MCF 10A (cell line): ENCODE measurements at regions of chr1 and their contacts with region 1.

Region 1: GRCh38 chr1:164786980-164787833 is 228.2 kb downstream of the PBX1 start:
- DNase-seq: peak; percentile 91
- H3K4me3 Mint-ChIP-seq: no peak overlapping the region
- H3K27ac Mint-ChIP-seq: no peak overlapping the region
- H3K4me1 Mint-ChIP-seq: peaks cover 38% of the 10 kb centered on the region
- H3K27me3 Mint-ChIP-seq: no peaks in the 10 kb centered on the region
- CTCF ChIP-seq: peak; percentile 98

Region 2: GRCh38 chr1:163528710-163529348 is 1258.4 kb before region 1 on chr1:
- CTCF ChIA-PET with region 1: interaction called, 16 read pairs
- POLR2A ChIA-PET with region 1: no interaction called
- intact Hi-C with region 1: loop called (anchors 2 kb)
- DNase-seq: peak; percentile 62
- H3K4me3 Mint-ChIP-seq: no peak overlapping the region
- H3K27ac Mint-ChIP-seq: no peak overlapping the region
- H3K4me1 Mint-ChIP-seq: no peaks in the 10 kb centered on the region
- H3K27me3 Mint-ChIP-seq: no peaks in the 10 kb centered on the region
- CTCF ChIP-seq: peak; percentile 66

Region 3: GRCh38 chr1:164240083-164240482 is 547.1 kb before region 1 on chr1:
- CTCF ChIA-PET with region 1: interaction called, 16 read pairs
- POLR2A ChIA-PET with region 1: no interaction called
- intact Hi-C with region 1: loop called (anchors 1 kb)
- DNase-seq: peak; percentile 52
- H3K4me3 Mint-ChIP-seq: no peak overlapping the region
- H3K27ac Mint-ChIP-seq: no peak overlapping the region
- H3K4me1 Mint-ChIP-seq: no peaks in the 10 kb centered on the region
- H3K27me3 Mint-ChIP-seq: no peaks in the 10 kb centered on the region
- CTCF ChIP-seq: peak; percentile 30

Region 4: GRCh38 chr1:164602480-164603093 is 184.6 kb before region 1 on chr1:
- CTCF ChIA-PET with region 1: interaction called, 20 read pairs
- POLR2A ChIA-PET with region 1: interaction called, 3 read pairs
- intact Hi-C with region 1: no loop called
- DNase-seq: peak; percentile 50
- H3K4me3 Mint-ChIP-seq: peak overlapping the region; percentile 13
- H3K27ac Mint-ChIP-seq: peak overlapping the region; percentile 50
- H3K4me1 Mint-ChIP-seq: peaks cover 17% of the 10 kb centered on the region
- H3K27me3 Mint-ChIP-seq: no peaks in the 10 kb centered on the region
- CTCF ChIP-seq: no peak

Region 5: GRCh38 chr1:164637461-164638375 is 149.5 kb before region 1 on chr1:
- CTCF ChIA-PET with region 1: interaction called, 15 read pairs
- POLR2A ChIA-PET with region 1: no interaction called
- intact Hi-C with region 1: no loop called
- DNase-seq: peak; percentile 73
- H3K4me3 Mint-ChIP-seq: no peak overlapping the region
- H3K27ac Mint-ChIP-seq: peak overlapping the region; percentile 10
- H3K4me1 Mint-ChIP-seq: peaks cover 31% of the 10 kb centered on the region
- H3K27me3 Mint-ChIP-seq: no peaks in the 10 kb centered on the region
- CTCF ChIP-seq: no peak

Region 6: GRCh38 chr1:164801246-164801731 is 14.1 kb after region 1 on chr1:
- CTCF ChIA-PET with region 1: interaction called, 47 read pairs
- POLR2A ChIA-PET with region 1: no interaction called
- intact Hi-C with region 1: no loop called
- DNase-seq: no peak
- H3K4me3 Mint-ChIP-seq: no peak overlapping the region
- H3K27ac Mint-ChIP-seq: no peak overlapping the region
- H3K4me1 Mint-ChIP-seq: no peaks in the 10 kb centered on the region
- H3K27me3 Mint-ChIP-seq: no peaks in the 10 kb centered on the region
- CTCF ChIP-seq: no peak

Region 7: DNA sequence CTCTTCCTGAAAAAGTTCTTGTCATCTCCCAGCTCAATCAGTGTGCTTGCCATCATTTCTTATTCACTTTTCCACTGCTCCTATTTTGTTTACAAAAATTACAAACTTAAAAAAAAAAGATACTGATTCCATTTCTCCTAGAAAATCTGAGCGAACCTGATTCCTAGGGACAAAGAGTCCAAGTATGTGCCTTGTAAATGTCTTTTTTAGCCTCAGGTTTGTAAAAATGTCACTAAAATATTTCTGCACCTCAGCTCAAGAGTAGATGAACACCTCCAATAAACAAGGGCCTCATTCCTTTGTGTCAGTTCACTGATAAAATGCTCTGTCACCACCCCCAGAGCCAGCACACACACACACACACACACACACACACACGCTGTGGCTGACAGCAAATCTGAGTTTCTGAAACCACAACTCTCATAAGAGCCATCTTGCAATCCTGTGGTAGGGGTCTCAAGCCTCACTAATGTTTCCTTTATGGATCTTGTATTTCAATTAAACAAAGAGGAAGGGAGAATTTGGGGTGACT is 71.0 kb after region 1 on chr1:
- CTCF ChIA-PET with region 1: no interaction called
- POLR2A ChIA-PET with region 1: no interaction called
- intact Hi-C with region 1: no loop called
- DNase-seq: no peak
- H3K4me3 Mint-ChIP-seq: no peak overlapping the region
- H3K27ac Mint-ChIP-seq: no peak overlapping the region
- H3K4me1 Mint-ChIP-seq: no peaks in the 10 kb centered on the region
- H3K27me3 Mint-ChIP-seq: peaks cover 14% of the 10 kb centered on the region
- CTCF ChIP-seq: no peak